ENCODE measurements at regions of chr14 and their contacts with region 1.

Region 1: DNA sequence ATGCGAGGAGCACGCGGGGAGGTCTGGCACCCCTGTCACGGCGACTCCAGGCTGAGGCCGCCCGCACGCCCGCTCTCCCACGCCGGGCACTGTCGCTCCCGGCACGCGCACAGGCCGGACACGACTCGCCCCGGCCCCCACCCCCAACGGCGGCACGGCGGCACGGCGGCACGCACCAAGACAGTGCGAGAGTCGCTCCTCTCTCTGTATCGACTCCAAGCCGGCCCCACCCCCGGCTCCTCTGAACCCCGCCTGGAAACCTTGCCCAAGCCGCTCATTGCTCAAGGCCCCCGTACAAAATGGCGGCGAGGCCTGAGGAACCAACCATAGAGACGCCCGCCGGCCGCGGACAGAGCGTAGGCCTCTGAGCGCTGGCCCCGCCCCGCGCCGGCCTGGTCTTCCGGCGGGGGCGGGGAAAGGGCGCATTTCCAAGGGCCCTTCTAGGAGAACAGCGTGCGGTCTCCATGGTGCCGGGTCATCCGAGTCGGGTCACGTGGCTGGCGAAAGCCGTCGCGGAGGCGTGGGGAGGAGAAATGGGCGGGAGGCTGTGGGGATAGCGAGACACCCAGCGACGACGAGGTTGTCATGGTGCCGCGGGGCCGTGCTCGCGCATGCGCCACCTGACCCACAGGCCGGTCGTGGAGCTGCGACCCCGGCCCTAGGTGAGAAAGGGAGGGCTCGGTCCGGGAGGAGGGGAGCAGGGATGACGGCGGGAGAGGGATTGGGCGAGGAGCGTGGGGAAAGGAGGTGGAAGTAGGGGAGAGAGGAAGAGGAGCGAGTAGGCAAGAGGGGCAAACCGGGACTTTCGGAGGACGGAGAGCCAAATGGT is at the start of gene CIPC:
- DNase-seq: peak; percentile 97
- ATAC-seq: peak; percentile 94
- H3K4me3 Mint-ChIP-seq: peak within 1 kb of the TSS; percentile 84
- H3K27ac Mint-ChIP-seq: peak within 1 kb of the TSS; percentile 95
- H3K4me1 Mint-ChIP-seq: peaks cover 52% of the 10 kb centered on the region
- H3K27me3 Mint-ChIP-seq: no peaks in the 10 kb centered on the region
- CTCF ChIP-seq: no peak
- total RNA-seq, gene CIPC: 22.5 to 25.4 TPM (median 24.2 TPM) in 3 replicates

Region 2: DNA sequence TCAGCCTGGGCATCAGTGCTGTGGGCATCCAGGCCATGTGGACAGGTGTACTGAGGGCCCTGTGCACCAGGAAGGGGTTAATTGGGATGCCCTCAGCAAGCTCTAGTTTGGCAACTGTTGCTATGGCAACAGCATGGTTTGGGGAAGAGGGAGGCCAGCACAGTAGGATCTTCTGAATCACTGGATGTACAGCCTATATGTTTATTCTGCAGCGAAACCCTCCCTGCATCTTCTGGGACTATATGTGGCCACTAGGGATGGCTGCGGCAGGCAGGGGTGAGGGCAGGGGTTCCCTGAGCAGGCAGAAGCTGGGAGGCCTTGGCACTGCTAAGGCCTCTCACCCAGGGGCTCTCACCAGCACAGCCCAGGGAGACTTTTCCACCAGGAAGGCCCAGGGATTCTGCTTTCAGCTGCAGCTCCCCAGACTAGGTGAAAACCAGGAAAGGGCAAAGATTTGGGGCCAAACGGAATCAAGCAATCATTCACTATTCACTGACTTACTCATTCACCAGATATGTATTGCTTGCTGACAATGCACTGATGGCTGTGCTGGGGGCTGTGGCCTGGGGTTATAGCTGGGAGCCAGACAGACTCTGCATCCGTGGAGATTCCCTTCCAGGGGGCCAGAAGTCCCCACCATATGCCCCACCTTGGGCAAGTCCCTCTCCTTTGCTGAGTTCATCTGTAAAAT is 112.2 kb before region 1 on chr14:
- CTCF ChIA-PET with region 1: no interaction called
- POLR2A ChIA-PET with region 1: no interaction called
- DNase-seq: no peak
- ATAC-seq: peak; percentile 23; the same call in 1 of the 2 replicates
- H3K4me3 Mint-ChIP-seq: no peak overlapping the region
- H3K27ac Mint-ChIP-seq: peak overlapping the region; percentile 57; the same call in 1 of the 2 replicates
- H3K4me1 Mint-ChIP-seq: peaks cover 43% of the 10 kb centered on the region
- H3K27me3 Mint-ChIP-seq: no peaks in the 10 kb centered on the region
- CTCF ChIP-seq: no peak

Region 3: GRCh38 chr14:77111043-77111442 is 13.1 kb after region 1 on chr14:
- CTCF ChIA-PET with region 1: interaction called, 17 read pairs
- POLR2A ChIA-PET with region 1: interaction called, 7 read pairs
- DNase-seq: peak; percentile 69
- ATAC-seq: peak; percentile 92
- H3K4me3 Mint-ChIP-seq: peak overlapping the region; percentile 28
- H3K27ac Mint-ChIP-seq: peak overlapping the region; percentile 100
- H3K4me1 Mint-ChIP-seq: peaks cover 52% of the 10 kb centered on the region
- H3K27me3 Mint-ChIP-seq: no peaks in the 10 kb centered on the region
- CTCF ChIP-seq: no peak

Measured in WTC11 (cell line).